ENCODE measurements at regions of chr19 and their contacts with region 1.

Region 1: DNA sequence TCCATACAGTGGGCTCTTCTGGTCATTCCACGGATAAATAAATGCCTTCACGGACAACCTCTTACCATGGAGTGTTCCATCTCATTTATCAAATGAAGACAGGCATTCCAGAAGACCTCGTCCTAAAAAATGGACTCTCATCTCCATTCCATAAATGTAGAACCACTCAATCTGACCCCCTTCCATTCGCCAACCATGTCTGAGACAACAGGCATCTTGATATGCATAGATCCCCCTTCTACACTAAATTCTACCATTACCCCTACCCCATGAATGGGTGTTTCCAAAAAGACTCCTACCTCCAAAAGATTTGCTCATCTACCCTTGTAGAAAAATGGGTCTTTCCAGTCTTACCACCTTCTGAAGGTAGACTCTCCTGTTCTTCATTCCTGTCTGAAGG is 9.0 kb downstream of the RASIP1 start:
- DNase-seq: no peak

Region 2: DNA sequence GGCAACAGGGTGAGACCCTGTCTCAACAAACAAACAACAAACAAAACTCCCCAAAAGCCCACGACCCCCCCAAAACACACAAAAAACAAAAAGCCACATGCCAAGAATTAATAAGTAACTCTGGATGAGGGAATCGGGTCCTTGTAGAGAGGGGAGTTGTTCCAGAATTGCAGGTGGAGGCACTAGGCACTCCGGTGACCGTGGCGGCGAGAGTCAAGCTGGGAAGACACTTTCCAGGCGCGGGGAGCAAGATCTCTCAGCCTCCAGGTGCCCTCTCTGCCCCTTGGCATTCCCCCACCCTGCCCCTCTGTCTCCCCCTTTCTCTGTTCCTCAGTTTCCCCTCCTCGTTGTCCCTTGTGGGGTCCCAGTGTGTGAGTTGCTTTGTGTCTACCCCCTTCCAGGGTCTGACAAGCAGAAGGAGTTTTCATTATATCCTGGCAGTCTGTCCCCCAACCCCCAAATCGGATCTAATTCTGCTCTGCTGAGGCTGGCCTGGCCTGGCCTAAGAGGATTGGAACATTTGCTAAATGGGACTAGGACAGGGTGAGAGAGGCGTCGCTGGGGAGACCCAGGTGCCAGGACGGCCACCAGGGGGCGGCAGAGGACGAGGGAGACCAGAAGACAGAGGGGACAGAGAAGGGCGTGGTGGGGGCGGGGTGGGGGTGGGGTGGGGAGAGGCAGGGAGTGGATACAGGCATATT is 918.0 kb before region 1 on chr19:
- intact Hi-C with region 1: no loop called
- DNase-seq: peak; percentile 91

Region 3: DNA sequence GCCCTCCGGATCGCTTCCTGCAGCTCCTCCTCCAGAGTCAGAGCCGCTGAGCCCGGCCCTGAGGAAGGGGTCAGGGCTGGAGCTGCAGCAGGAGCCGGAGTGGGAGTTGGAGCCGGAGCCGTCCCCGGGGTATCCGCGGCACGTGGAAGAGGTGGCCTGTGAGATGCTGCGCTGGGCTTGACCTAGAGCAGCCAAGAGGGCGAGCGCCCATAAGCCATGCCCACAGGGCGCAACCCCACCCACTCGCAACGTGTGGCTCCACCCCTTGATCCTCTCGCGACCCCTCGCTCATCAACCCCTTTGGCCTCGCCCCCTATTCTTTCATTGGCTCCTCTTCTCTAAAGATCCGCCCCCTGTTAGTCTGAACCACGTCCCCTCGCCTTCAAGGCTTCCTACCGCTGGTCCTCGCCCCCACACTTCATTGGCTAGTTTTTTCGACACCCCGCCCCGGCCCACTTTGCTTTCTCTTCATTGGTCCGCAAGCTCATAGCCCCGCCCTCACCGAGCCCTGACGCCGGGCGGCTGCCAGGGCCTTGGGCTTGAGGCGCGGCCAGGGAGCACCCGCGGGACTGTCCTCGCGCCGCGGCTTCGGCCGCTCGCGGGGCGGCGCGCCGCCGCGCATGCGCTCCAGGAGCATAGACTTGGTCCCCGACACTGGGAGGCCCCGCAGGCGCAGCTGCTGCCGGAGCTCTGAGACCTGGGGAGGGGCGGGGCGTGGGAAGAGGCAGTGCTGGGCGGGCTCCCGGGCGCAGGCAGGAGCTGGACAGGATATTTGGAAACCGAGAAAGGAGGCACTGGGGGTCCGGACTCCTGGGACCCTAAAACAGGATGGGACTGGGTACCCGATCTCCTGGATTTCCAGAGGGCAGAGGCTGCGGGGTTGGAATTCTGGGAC is 17.3 kb before region 1 on chr19:
- intact Hi-C with region 1: loop called in 1 of 2 experiments (anchors 1 kb)
- DNase-seq: peak; percentile 99

Region 4: DNA sequence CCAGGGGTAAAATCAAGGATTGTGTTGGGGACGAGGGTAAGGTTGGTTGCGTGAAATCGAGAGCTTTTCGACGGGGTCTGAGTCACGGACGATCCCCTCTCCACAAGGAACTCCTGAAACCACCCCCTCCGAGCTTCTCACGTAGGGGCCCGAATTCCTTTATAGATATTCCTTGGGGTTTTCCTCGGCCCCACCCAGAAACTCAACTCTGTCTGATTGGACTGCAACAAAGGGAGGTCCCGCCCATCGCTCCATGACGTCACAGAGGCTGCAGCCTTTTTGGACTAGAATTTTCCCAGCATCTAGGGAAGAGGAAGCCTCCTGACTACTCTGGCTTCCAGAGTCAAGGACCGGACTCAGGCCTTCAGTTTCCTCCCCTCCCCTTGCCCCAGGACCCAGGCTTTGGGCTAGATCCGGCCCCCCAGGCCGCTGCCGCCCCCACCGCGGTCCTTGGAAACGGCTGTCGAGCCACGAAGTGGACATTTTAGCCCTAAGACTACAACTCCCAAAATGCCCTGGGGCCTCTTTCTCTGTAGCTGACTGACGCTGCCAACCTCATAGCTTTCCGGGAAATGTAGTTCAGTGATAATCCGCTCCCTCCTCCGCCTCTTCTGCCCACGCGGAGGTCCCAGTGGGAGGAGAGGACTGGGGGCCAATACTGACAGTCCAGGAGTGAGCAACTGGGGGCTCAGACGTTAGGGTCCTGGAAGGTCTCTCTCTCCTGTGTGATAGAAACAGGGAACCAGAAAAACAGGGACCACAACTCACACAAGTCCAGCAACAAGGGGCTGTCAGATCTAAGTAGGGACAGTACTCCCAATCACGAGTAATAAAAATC is 15.5 kb after region 1 on chr19 and contains the start of gene IZUMO1:
- intact Hi-C with region 1: no loop called
- DNase-seq: peak; percentile 94
- total RNA-seq, gene IZUMO1: 0.52 to 0.56 TPM

Region 5: GRCh38 chr19:48757089-48757675 is 25.7 kb after region 1 on chr19:
- intact Hi-C with region 1: no loop called
- DNase-seq: no peak

Measured in posterior vena cava (tissue), 2 donors.